Heart left ventricle (tissue), 16 donors: ENCODE measurements at regions of chr7 and their contacts with region 1.

Region 1: DNA sequence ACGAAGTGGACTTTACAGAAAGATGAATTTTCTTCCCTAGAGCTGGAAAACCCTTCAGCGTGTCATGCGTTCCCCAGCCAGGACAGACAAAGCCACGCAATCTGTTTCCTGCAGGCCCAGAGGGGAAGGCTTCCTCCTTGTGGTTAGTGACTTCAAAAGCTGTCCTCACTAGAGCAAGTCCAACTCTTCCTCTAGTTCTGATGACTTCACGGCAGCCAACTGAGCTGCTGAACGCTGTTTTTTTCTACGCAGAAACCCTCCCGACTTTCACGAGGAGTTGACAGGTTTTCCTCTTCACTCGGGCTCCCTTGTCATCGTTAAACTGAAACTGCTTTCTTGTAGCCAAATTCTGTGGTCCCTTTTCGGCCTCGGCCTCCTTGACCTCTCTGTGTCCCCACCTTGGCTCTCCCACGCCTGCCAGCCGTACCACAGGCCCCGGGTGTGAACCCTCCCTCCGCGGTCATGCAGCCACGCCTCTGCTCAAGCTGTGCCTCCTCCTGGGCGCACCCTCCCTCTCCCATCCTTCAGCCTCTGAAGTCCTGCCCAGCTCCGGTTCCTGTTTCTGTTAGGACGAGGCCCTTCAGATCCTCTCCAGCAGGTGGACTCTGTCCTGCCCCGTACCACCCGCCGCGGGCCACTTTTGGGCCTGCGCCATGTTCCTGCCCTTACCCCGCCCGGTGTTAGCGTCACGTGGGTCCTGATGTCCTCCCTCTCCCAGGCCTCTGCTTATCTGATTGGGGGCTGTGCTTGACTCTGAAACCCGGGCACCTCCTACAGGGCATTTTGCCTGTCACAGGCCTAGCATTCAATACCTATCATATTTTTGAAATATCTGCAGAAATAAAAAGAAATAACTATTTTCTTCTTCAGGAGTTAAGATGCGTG is 39.3 kb downstream of the CUX1 start:
- DNase-seq: peak; percentile 89 to 94 (median 93)
- ATAC-seq: peak; percentile 89 to 96 (median 93)
- H3K4me3 ChIP-seq: peak overlapping the region in 10 of 12 donors; percentile 35 to 59 (median 51)
- H3K27ac ChIP-seq: peak overlapping the region; percentile 78 to 95 (median 87)
- H3K4me1 ChIP-seq: peaks cover 5 to 72% (median 50%) of the 10 kb centered on the region in 12 donors
- H3K27me3 ChIP-seq: no peaks in the 10 kb centered on the region
- CTCF ChIP-seq: peak in 11 of 12 donors; percentile 33 to 61 (median 52)
- POLR2A ChIP-seq: peak in 1 of 2 donors; percentile 33

Region 2: DNA sequence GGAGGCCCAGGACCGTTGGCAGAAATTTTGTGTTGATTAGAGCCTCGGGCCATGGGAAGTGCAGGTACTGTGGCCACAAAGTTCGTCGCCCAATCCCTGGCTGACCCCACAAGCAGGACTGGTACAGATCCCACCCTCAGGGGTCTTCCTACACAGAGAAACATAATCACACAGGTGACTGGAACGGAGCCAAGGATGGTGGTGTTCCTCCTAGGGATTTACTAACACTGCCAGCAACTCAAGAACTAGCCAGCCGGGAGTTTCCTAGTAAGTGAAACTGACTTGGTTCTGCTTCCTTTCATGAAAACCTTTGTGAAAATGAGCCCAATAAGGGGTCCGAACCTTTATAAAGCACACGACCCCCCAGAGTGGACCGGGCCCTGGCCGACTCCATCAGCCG is 33.6 kb before region 1 on chr7:
- intact Hi-C with region 1: loop called in 4 of 10 experiments (anchors 5 kb)
- DNase-seq: peak in 1 of 5 donors; percentile 30
- ATAC-seq: peak in 1 of 4 donors; percentile 10
- H3K4me3 ChIP-seq: peak overlapping the region in 1 of 12 donors; percentile 3
- H3K27ac ChIP-seq: peak overlapping the region in 9 of 12 donors; percentile 2 to 60 (median 24)
- H3K4me1 ChIP-seq: peaks cover 0 to 64% (median 43%) of the 10 kb centered on the region in 12 donors
- H3K27me3 ChIP-seq: no peaks in the 10 kb centered on the region
- CTCF ChIP-seq: no peak
- POLR2A ChIP-seq: no peak

Region 3: DNA sequence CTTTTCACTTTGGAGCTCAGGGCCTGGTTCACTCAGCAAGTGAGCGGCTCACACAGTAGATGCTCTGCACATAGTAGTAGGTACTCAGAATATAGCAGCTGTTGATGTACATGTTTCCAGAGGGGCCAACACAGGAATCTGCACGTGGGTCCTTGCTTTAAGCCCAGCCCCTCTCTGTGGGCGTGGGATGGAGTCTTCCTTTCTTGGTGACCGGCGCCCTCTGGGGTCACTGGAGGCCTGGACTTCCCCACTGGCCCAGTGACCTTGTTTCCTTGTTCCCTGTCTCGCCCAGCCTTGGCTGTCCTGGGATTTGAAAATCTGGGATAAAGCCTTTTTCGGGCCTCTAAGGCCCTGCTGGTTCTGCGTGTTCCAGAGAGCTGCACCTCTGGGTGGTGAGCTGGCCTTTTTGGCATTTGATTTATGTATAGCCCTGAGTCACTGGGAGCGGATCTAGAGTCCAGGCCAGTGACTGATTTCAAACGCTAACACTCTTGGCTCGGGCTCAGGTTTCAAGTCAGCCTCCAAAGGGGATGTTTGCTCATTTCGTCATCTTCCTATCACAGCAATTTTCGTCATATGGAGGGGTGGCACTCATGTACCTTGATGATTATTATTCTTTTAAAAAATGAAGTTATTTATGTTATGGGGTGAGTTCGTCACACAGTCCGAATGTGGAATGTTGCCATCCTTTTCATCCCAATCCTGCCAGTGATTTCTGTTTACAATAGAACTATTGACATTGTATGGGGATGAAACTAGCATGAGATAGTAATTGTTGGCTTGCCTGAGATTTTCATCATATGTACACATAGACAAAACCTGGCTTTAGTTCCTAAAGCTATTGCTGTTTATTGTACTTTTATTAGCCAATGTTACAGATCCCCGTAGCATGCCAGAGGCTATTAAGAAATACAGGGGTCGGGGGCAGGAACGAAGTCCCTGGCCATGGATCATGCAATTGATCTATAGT is 26.2 kb after region 1 on chr7:
- intact Hi-C with region 1: loop called in 1 of 10 experiments (anchors 1 kb)
- DNase-seq: peak; percentile 79 to 94 (median 83)
- ATAC-seq: peak; percentile 90 to 95 (median 94)
- H3K4me3 ChIP-seq: peak overlapping the region in 1 of 12 donors; percentile 20
- H3K27ac ChIP-seq: peak overlapping the region; percentile 72 to 94 (median 84)
- H3K4me1 ChIP-seq: peaks cover 6 to 87% (median 52%) of the 10 kb centered on the region in 12 donors
- H3K27me3 ChIP-seq: no peaks in the 10 kb centered on the region
- CTCF ChIP-seq: peak in 3 of 12 donors; percentile 10 to 20 (median 18)
- POLR2A ChIP-seq: no peak

Region 4: GRCh38 chr7:101911800-101912715 is 55.3 kb after region 1 on chr7:
- intact Hi-C with region 1: loop called in 1 of 10 experiments (anchors 5 kb)
- DNase-seq: peak in 2 of 5 donors; percentile 75 to 79
- ATAC-seq: peak; percentile 29 to 77 (median 56)
- H3K4me3 ChIP-seq: no peak overlapping the region
- H3K27ac ChIP-seq: peak overlapping the region; percentile 51 to 87 (median 70)
- H3K4me1 ChIP-seq: peaks cover 0 to 47% (median 29%) of the 10 kb centered on the region in 12 donors
- H3K27me3 ChIP-seq: no peaks in the 10 kb centered on the region
- CTCF ChIP-seq: no peak
- POLR2A ChIP-seq: no peak